T-cell (primary cell): ENCODE measurements at regions of chr17 and their contacts with region 1.

Region 1: GRCh38 chr17:32357615-32358014 is 7.7 kb downstream of the ZNF207 start:
- DNase-seq: no peak
- ATAC-seq: no peak
- H3K4me3 ChIP-seq: no peak overlapping the region
- H3K4me3 Mint-ChIP-seq: no peak overlapping the region
- H3K27ac ChIP-seq: no peak overlapping the region
- H3K27ac Mint-ChIP-seq: no peak overlapping the region
- H3K4me1 ChIP-seq: peaks cover 25 to 46% of the 10 kb centered on the region in 2 experiments
- H3K4me1 Mint-ChIP-seq: peaks cover 59 to 72% (median 65%) of the 10 kb centered on the region in 3 donors
- H3K27me3 ChIP-seq: no peaks in the 10 kb centered on the region
- H3K27me3 Mint-ChIP-seq: no peaks in the 10 kb centered on the region

Region 2: DNA sequence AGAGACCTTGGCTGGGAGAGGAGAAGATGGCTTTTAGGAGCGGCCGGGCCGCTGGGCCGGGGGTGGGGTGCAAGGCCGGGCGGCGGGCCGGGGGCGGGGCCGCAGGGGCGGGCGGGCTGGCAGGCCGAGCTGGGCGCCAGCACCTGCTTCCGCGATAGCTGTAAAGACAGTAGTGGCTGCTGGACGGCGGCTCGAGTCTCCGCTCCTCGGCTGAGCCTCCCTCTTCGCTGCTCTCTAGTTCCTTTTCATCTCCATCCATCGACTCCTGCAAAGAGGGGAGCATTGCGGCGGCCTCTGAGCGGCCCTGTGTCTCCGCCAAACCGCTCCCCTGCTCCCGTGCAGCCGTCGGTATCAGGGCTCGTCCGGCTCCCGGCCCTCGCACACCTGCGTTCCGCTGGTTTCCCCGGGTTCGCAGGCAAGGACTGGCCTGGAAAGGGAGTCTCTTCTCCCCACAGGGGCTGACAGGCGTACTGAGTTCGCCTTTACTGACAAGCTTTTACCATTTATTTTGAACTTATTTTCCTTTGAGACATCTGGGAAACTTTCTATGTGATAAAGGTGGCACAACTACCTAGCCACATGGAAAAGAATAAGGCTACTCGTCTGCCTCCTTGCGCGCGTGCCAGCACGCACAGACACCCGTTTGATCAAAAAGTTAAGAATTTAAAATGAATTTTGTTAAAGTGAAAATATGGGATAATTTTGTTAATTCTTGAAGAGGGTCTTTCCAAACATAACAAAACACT is 15.6 kb before region 1 on chr17 and contains the start of gene C17orf75:
- CTCF ChIA-PET with region 1: interaction called in 1 of 2 experiments, 3 read pairs
- POLR2A ChIA-PET with region 1: interaction called in 1 of 2 experiments, 11 read pairs
- DNase-seq: peak; percentile 37 to 84 (median 70)
- ATAC-seq: peak; percentile 89 to 95 (median 92)
- H3K4me3 ChIP-seq: peak within 1 kb of the TSS; percentile 74 to 75
- H3K4me3 Mint-ChIP-seq: peak within 1 kb of the TSS; percentile 88 to 95 (median 88)
- H3K27ac ChIP-seq: peak within 1 kb of the TSS; percentile 84
- H3K27ac Mint-ChIP-seq: peak within 1 kb of the TSS; percentile 93 to 96
- H3K4me1 ChIP-seq: peaks cover 4 to 19% of the 10 kb centered on the region in 2 experiments
- H3K4me1 Mint-ChIP-seq: peaks cover 21 to 26% (median 25%) of the 10 kb centered on the region in 3 donors
- H3K27me3 ChIP-seq: no peaks in the 10 kb centered on the region
- H3K27me3 Mint-ChIP-seq: no peaks in the 10 kb centered on the region
- total RNA-seq, gene C17orf75: 12.2 to 22.0 (median 17.6) TPM